GM12878 (cell line): ENCODE measurements at regions of chr1 and their contacts with region 1.

Region 1: GRCh38 chr1:184805667-184806295 is 51.1 kb upstream of the EDEM3 start:
- DNase-seq: peak; percentile 55
- ATAC-seq: peak; percentile 99
- H3K4me3 ChIP-seq: no peak overlapping the region
- H3K27ac ChIP-seq: no peak overlapping the region
- H3K4me1 ChIP-seq: peaks cover 9% of the 10 kb centered on the region
- H3K27me3 ChIP-seq: no peaks in the 10 kb centered on the region
- CTCF ChIP-seq: peak; percentile 85 to 98 (median 87)
- EP300 ChIP-seq: no peak
- POLR2A ChIP-seq: no peak
- RAD21 ChIP-seq: peak; percentile 99

Region 2: DNA sequence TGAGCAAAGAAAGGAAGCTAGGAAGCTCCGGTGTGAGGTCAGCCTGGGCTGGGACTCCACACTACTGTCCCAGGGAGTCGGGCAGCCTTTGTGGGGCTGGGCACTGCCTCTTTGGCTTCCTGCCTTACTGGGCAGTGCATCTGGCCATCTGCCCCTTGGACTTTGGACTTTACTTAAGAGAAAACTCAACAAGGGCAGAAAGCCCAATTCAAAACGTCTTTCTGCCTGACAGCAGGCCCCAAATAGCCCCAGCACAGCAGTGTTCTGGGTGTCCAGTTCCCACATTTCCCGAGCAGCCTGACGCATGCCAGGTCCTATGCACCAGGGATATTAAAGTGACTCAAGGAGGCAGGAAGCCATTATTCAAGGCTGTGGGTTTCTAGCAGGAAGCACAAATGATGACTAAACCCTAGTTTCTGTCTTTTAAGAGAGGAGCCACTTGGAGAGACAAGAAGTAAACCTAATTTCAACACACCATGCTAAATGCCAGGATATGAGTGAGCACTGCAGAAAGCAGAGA is 13.3 kb before region 1 on chr1:
- CTCF ChIA-PET with region 1: interaction called, 18 read pairs
- POLR2A ChIA-PET with region 1: no interaction called
- RAD21 ChIA-PET with region 1: interaction called, 4 read pairs
- SMC1A ChIA-PET with region 1: interaction called, 8 read pairs
- in situ Hi-C with region 1: no loop called
- intact Hi-C with region 1: no loop called
- DNase-seq: no peak
- ATAC-seq: peak; percentile 74
- H3K4me3 ChIP-seq: no peak overlapping the region
- H3K27ac ChIP-seq: no peak overlapping the region
- H3K4me1 ChIP-seq: no peaks in the 10 kb centered on the region
- H3K27me3 ChIP-seq: no peaks in the 10 kb centered on the region
- CTCF ChIP-seq: no peak
- EP300 ChIP-seq: no peak
- POLR2A ChIP-seq: no peak
- RAD21 ChIP-seq: no peak

Region 3: GRCh38 chr1:184892116-184892515 is 86.3 kb after region 1 on chr1:
- CTCF ChIA-PET with region 1: interaction called, 4 read pairs
- POLR2A ChIA-PET with region 1: no interaction called
- RAD21 ChIA-PET with region 1: interaction called, 10 read pairs
- SMC1A ChIA-PET with region 1: interaction called, 8 read pairs
- in situ Hi-C with region 1: no loop called
- intact Hi-C with region 1: no loop called
- DNase-seq: no peak
- ATAC-seq: peak; percentile 94
- H3K4me3 ChIP-seq: no peak overlapping the region
- H3K27ac ChIP-seq: no peak overlapping the region
- H3K4me1 ChIP-seq: peaks cover 12% of the 10 kb centered on the region
- H3K27me3 ChIP-seq: no peaks in the 10 kb centered on the region
- CTCF ChIP-seq: no peak
- EP300 ChIP-seq: no peak
- POLR2A ChIP-seq: no peak
- RAD21 ChIP-seq: no peak

Region 4: DNA sequence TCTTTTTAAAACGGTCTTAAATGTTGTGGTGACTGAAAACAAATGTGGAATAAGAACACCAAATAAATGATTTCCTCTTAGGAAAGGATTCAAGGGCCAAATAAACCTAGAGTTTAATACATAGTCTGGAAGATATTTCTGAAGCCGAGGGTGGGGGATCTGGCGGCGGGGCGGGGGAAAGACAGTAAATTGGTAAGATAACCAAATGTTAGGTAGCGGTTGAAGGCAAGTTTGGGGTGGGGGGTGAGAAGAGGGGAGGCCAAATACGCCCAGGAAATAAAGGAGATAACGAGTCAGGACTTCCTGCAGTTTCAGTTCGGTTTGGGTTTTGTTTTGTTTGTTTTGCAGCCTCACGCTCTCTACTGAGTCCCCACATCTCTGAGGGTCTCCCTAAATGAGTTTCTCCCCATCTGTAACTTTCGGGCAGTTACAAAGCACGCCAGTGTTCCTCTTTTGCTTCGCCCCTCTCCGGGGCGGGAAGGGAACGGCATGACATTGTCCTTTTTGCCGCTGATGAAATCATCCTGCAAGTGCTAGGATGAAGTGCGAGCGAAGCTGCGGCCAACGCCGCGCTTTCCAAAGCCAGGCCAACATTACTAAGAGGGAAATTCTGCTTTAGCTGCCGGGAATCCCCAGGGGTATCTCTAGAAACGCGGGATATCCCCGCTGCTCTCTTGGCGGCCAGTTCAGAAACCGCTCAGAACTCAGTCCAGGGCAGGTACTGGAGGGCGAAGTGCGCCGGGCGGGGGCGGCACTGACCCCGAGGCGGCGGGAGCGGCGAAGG is 167.7 kb after region 1 on chr1:
- CTCF ChIA-PET with region 1: interaction called, 353 read pairs
- POLR2A ChIA-PET with region 1: interaction called, 3 read pairs
- RAD21 ChIA-PET with region 1: interaction called, 152 read pairs
- SMC1A ChIA-PET with region 1: interaction called, 219 read pairs
- in situ Hi-C with region 1: loop called (anchors 5 kb)
- intact Hi-C with region 1: no loop called
- DNase-seq: peak; percentile 56
- ATAC-seq: peak; percentile 78
- H3K4me3 ChIP-seq: peak overlapping the region; percentile 96
- H3K27ac ChIP-seq: peak overlapping the region; percentile 86
- H3K4me1 ChIP-seq: peaks cover 21% of the 10 kb centered on the region
- H3K27me3 ChIP-seq: no peaks in the 10 kb centered on the region
- CTCF ChIP-seq: no peak
- EP300 ChIP-seq: peak; percentile 36 to 40; a peak in 3 of 4 replicates
- POLR2A ChIP-seq: no peak
- RAD21 ChIP-seq: 0 out of 2 replicates have a peak, but pooled peaks have one; percentile 16

Region 5: GRCh38 chr1:185170291-185170848 is 364.6 kb after region 1 on chr1:
- CTCF ChIA-PET with region 1: interaction called, 101 read pairs
- POLR2A ChIA-PET with region 1: no interaction called
- RAD21 ChIA-PET with region 1: interaction called, 62 read pairs
- SMC1A ChIA-PET with region 1: interaction called, 50 read pairs
- in situ Hi-C with region 1: no loop called
- intact Hi-C with region 1: loop called (anchors 1 kb)
- DNase-seq: peak; percentile 32
- ATAC-seq: peak; percentile 97
- H3K4me3 ChIP-seq: no peak overlapping the region
- H3K27ac ChIP-seq: no peak overlapping the region
- H3K4me1 ChIP-seq: no peaks in the 10 kb centered on the region; the same call in 1 of the 2 replicates
- H3K27me3 ChIP-seq: no peaks in the 10 kb centered on the region
- CTCF ChIP-seq: peak; percentile 64 to 70 (median 67)
- EP300 ChIP-seq: no peak
- POLR2A ChIP-seq: no peak
- RAD21 ChIP-seq: peak; percentile 85

Region 6: GRCh38 chr1:185224132-185224531 is 418.4 kb after region 1 on chr1:
- CTCF ChIA-PET with region 1: no interaction called
- POLR2A ChIA-PET with region 1: no interaction called
- RAD21 ChIA-PET with region 1: no interaction called
- SMC1A ChIA-PET with region 1: no interaction called
- in situ Hi-C with region 1: no loop called
- intact Hi-C with region 1: no loop called
- DNase-seq: no peak
- ATAC-seq: no peak
- H3K4me3 ChIP-seq: no peak overlapping the region
- H3K27ac ChIP-seq: no peak overlapping the region
- H3K4me1 ChIP-seq: no peaks in the 10 kb centered on the region
- H3K27me3 ChIP-seq: no peaks in the 10 kb centered on the region
- CTCF ChIP-seq: no peak
- EP300 ChIP-seq: no peak
- POLR2A ChIP-seq: no peak
- RAD21 ChIP-seq: no peak

Region 7: DNA sequence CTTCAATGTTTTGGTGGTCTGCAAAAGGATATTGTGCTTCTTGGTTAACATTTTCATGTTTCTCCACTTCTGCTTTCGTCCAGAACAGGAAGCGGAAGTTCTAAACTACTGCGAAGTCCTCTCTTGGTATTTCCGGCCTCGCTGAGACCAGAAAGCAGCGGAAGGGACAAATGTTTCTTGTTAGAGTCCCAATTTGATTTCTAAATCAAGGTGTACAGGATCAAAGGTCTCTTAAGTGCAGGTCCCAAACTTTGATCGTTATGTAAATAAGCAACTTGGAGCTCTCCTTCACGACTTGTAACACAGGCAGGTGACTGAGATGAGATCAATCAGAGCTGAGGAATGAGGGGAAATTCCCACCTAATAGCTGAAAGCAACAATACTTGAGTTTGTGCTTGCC is 888.3 kb after region 1 on chr1:
- CTCF ChIA-PET with region 1: no interaction called
- POLR2A ChIA-PET with region 1: no interaction called
- RAD21 ChIA-PET with region 1: interaction called, 3 read pairs
- SMC1A ChIA-PET with region 1: no interaction called
- in situ Hi-C with region 1: loop called (anchors 10 kb)
- intact Hi-C with region 1: no loop called
- DNase-seq: peak; percentile 26
- ATAC-seq: peak; percentile 71
- H3K4me3 ChIP-seq: peak overlapping the region; percentile 31; the same call in 1 of the 2 replicates
- H3K27ac ChIP-seq: no peak overlapping the region
- H3K4me1 ChIP-seq: no peaks in the 10 kb centered on the region
- H3K27me3 ChIP-seq: no peaks in the 10 kb centered on the region; a peak in 1 of 4 replicates
- CTCF ChIP-seq: no peak
- EP300 ChIP-seq: no peak
- POLR2A ChIP-seq: no peak
- RAD21 ChIP-seq: no peak